CD8-positive, alpha-beta T cell (primary cell): ENCODE measurements at regions of chr1 and their contacts with region 1.

Region 1: DNA sequence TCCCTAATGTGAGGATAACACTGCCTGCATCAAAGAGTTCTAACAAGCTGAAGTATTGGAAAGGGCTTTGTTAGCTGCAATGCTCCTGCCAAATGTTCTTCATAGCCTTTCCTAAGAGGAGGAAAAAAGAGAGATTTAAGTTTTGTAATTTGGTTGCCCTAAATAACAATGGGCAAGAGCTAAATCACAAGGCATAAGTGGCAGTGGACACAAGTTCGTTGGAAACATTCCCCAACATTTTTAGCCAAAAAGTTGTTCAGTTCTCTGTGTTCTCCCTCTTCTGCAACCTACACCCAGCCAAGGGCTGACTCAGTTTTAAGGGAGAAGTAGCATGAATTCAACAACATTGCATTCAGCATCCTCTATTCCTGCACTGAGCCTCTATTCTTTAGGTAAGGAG is 2.6 kb upstream of the UQCRHL start:
- DNase-seq: no peak
- ATAC-seq: no peak
- H3K4me3 ChIP-seq: no peak overlapping the region
- H3K4me3 Mint-ChIP-seq: no peak overlapping the region
- H3K27ac ChIP-seq: no peak overlapping the region
- H3K27ac Mint-ChIP-seq: no peak overlapping the region
- H3K4me1 ChIP-seq: no peaks in the 10 kb centered on the region
- H3K4me1 Mint-ChIP-seq: no peaks in the 10 kb centered on the region
- H3K27me3 ChIP-seq: no peaks in the 10 kb centered on the region
- H3K27me3 Mint-ChIP-seq: no peaks in the 10 kb centered on the region
- CTCF ChIP-seq: no peak

Region 2: DNA sequence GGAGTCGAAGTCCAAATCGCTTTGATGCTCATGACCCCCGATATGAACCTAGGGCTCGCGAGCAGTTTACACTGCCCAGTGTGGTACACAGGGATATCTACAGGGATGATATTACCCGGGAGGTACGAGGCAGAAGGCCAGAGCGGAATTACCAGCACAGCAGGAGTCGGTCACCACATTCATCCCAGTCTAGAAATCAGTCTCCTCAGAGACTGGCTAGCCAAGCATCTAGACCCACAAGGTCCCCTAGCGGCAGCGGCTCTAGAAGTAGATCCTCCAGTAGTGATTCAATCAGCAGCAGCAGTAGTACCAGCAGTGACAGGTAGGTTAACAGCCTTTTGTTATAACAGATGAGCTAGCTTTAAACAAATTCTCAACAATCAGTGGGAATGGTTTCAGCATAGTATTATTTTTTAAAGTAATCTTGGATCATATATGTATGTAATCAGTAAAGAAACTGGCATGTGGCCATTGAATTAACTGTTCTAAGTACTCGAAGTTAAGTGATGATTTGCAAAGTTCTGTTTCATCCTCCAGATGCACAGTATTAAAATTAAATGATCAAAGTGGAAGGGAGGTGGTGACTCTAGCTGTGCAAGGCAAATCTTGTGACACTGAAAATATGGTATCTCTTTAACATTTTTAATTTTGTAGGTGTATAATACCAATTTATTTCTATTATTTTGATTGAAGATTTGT is 66.4 kb after region 1 on chr1:
- CTCF ChIA-PET with region 1: interaction called, 8 read pairs
- POLR2A ChIA-PET with region 1: no interaction called
- intact Hi-C with region 1: loop called in 1 of 2 experiments (anchors 10 kb)
- DNase-seq: peak in 1 of 9 experiments; percentile 15
- ATAC-seq: no peak
- H3K4me3 ChIP-seq: no peak overlapping the region
- H3K4me3 Mint-ChIP-seq: no peak overlapping the region
- H3K27ac ChIP-seq: no peak overlapping the region
- H3K27ac Mint-ChIP-seq: no peak overlapping the region
- H3K4me1 ChIP-seq: peaks cover 9% of the 10 kb centered on the region
- H3K4me1 Mint-ChIP-seq: peaks cover 61% of the 10 kb centered on the region
- H3K27me3 ChIP-seq: no peaks in the 10 kb centered on the region
- H3K27me3 Mint-ChIP-seq: no peaks in the 10 kb centered on the region
- CTCF ChIP-seq: no peak